OCI-LY7 (cell line): ENCODE measurements at regions of chr20 and their contacts with region 1.

Region 1: GRCh38 chr20:31572701-31573554 is 32.2 kb upstream of the ID1 start:
- DNase-seq: peak; percentile 92
- H3K4me3 ChIP-seq: peak overlapping the region; percentile 71
- H3K27ac ChIP-seq: peak overlapping the region; percentile 59
- H3K4me1 ChIP-seq: peaks cover 20% of the 10 kb centered on the region
- CTCF ChIP-seq: no peak

Region 2: DNA sequence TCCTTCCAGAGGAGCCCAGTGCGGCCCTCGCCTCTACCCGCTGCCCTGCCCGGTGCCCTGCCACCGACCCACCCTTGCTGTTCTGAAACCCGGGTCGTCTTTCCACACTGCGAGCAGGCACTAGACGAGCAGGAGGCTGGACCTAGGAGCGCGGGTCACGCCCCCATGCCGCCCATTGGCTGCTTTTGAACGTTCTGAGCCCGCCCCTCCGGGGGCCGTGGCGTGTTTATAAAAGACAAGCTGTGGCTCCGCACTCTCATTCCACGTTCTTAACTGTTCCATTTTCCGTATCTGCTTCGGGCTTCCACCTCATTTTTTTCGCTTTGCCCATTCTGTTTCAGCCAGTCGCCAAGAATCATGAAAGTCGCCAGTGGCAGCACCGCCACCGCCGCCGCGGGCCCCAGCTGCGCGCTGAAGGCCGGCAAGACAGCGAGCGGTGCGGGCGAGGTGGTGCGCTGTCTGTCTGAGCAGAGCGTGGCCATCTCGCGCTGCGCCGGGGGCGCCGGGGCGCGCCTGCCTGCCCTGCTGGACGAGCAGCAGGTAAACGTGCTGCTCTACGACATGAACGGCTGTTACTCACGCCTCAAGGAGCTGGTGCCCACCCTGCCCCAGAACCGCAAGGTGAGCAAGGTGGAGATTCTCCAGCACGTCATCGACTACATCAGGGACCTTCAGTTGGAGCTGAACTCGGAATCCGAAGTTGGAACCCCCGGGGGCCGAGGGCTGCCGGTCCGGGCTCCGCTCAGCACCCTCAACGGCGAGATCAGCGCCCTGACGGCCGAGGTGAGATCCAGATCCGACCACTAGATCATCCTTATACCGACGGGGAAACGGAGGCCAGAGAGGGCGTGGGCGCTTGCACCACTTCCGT is 32.3 kb after region 1 on chr20 and contains the start of gene ID1:
- CTCF ChIA-PET with region 1: interaction called, 5 read pairs
- POLR2A ChIA-PET with region 1: interaction called, 19 read pairs
- intact Hi-C with region 1: loop called (anchors 1 kb)
- DNase-seq: peak; percentile 90
- H3K4me3 ChIP-seq: peak within 1 kb of the TSS; percentile 70
- H3K27ac ChIP-seq: no peak within 1 kb of the TSS
- H3K4me1 ChIP-seq: peaks cover 20% of the 10 kb centered on the region
- CTCF ChIP-seq: no peak
- total RNA-seq, gene ID1: 3.3 and 4.7 TPM in 2 replicates